H1 (cell line): ENCODE measurements at regions of chr10 and their contacts with region 1.

Region 1: GRCh38 chr10:119817991-119818888 is 54.4 kb downstream of the MCMBP start:
- DNase-seq: peak; percentile 95 to 96
- H3K4me3 ChIP-seq: peak overlapping the region; percentile 54 to 90 (median 74)
- H3K27ac ChIP-seq: peak overlapping the region; percentile 90
- H3K4me1 ChIP-seq: peaks cover 0 to 11% (median 4%) of the 10 kb centered on the region in 4 experiments; a peak in 5 of 7 replicates
- H3K27me3 ChIP-seq: no peaks in the 10 kb centered on the region
- CTCF ChIP-seq: peak; percentile 56 to 65 (median 58)
- EP300 ChIP-seq: no peak
- POLR2A ChIP-seq: peak; percentile 95 to 96
- RAD21 ChIP-seq: peak; percentile 44 to 53

Region 2: GRCh38 chr10:119478111-119478802 is 340.0 kb before region 1 on chr10:
- CTCF ChIA-PET with region 1: no interaction called
- POLR2A ChIA-PET with region 1: no interaction called
- DNase-seq: no peak
- H3K4me3 ChIP-seq: no peak overlapping the region
- H3K27ac ChIP-seq: no peak overlapping the region
- H3K4me1 ChIP-seq: peaks cover 0 to 8% (median 2%) of the 10 kb centered on the region in 4 experiments; a peak in 3 of 7 replicates
- H3K27me3 ChIP-seq: peaks cover 48 to 89% (median 74%) of the 10 kb centered on the region in 4 experiments
- CTCF ChIP-seq: no peak
- EP300 ChIP-seq: no peak
- POLR2A ChIP-seq: no peak
- RAD21 ChIP-seq: no peak

Region 3: DNA sequence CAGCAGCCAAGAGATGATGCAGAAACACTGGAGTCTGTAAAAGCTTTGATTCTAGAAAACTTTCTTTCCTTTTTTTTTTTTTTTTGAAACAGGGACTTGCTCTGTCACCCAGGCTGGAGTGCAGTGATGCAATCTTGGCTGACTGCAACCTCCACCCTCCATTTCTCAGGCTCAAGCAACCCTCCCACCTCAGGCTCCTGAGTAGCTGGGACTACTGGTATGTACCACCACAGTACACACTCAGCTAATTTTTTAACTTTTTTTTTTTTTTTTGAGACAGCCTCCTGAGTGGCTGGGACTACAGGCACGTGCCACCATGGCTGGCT is 184.1 kb before region 1 on chr10:
- CTCF ChIA-PET with region 1: no interaction called
- POLR2A ChIA-PET with region 1: no interaction called
- DNase-seq: no peak
- H3K4me3 ChIP-seq: no peak overlapping the region
- H3K27ac ChIP-seq: no peak overlapping the region
- H3K4me1 ChIP-seq: no peaks in the 10 kb centered on the region
- H3K27me3 ChIP-seq: no peaks in the 10 kb centered on the region
- CTCF ChIP-seq: no peak
- EP300 ChIP-seq: no peak
- POLR2A ChIP-seq: no peak
- RAD21 ChIP-seq: no peak

Region 4: GRCh38 chr10:119807960-119808697 is 10.1 kb before region 1 on chr10:
- CTCF ChIA-PET with region 1: interaction called, 4 read pairs
- POLR2A ChIA-PET with region 1: interaction called, 19 read pairs
- DNase-seq: no peak
- H3K4me3 ChIP-seq: no peak overlapping the region
- H3K27ac ChIP-seq: no peak overlapping the region
- H3K4me1 ChIP-seq: no peaks in the 10 kb centered on the region
- H3K27me3 ChIP-seq: no peaks in the 10 kb centered on the region
- CTCF ChIP-seq: no peak
- EP300 ChIP-seq: no peak
- POLR2A ChIP-seq: no peak
- RAD21 ChIP-seq: no peak

Region 5: DNA sequence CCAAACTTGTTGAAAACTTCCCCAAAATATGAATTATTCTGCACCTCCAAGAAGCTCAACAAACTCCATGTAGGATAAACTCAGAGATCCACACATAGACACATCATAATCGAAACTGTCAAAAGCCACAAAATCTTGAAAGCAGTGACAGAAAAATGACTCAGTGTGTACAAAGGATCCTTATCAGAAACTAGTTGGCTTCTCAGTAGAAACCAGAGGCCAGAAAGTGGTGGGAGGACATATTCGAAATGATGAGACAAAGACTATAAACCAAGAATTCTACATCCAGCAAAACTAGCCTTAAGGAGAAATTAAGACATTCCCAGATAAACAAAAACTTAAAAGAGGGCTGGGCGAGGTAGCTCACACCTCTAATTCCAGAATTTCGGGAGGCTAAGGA is 15.9 kb after region 1 on chr10:
- CTCF ChIA-PET with region 1: interaction called, 4 read pairs
- POLR2A ChIA-PET with region 1: interaction called, 17 read pairs
- DNase-seq: no peak
- H3K4me3 ChIP-seq: no peak overlapping the region
- H3K27ac ChIP-seq: no peak overlapping the region
- H3K4me1 ChIP-seq: no peaks in the 10 kb centered on the region
- H3K27me3 ChIP-seq: no peaks in the 10 kb centered on the region
- CTCF ChIP-seq: no peak
- EP300 ChIP-seq: no peak
- POLR2A ChIP-seq: no peak
- RAD21 ChIP-seq: no peak

Region 6: GRCh38 chr10:120052964-120053702 is 234.9 kb after region 1 on chr10:
- CTCF ChIA-PET with region 1: no interaction called
- POLR2A ChIA-PET with region 1: no interaction called
- DNase-seq: no peak
- H3K4me3 ChIP-seq: no peak overlapping the region
- H3K27ac ChIP-seq: no peak overlapping the region
- H3K4me1 ChIP-seq: peaks cover 0 to 8% (median 0%) of the 10 kb centered on the region in 4 experiments; a peak in 3 of 7 replicates
- H3K27me3 ChIP-seq: no peaks in the 10 kb centered on the region
- CTCF ChIP-seq: no peak
- EP300 ChIP-seq: no peak
- POLR2A ChIP-seq: no peak
- RAD21 ChIP-seq: no peak